Activated CD4-positive, alpha-beta T cell treated with anti-CD3 and anti-CD28 coated beads, Interleukin-2, amount 10 ng/mL, durations not matched to agents 7 days and 5 days (primary cell): ENCODE measurements at regions of chr16 and their contacts with region 1.

Region 1: DNA sequence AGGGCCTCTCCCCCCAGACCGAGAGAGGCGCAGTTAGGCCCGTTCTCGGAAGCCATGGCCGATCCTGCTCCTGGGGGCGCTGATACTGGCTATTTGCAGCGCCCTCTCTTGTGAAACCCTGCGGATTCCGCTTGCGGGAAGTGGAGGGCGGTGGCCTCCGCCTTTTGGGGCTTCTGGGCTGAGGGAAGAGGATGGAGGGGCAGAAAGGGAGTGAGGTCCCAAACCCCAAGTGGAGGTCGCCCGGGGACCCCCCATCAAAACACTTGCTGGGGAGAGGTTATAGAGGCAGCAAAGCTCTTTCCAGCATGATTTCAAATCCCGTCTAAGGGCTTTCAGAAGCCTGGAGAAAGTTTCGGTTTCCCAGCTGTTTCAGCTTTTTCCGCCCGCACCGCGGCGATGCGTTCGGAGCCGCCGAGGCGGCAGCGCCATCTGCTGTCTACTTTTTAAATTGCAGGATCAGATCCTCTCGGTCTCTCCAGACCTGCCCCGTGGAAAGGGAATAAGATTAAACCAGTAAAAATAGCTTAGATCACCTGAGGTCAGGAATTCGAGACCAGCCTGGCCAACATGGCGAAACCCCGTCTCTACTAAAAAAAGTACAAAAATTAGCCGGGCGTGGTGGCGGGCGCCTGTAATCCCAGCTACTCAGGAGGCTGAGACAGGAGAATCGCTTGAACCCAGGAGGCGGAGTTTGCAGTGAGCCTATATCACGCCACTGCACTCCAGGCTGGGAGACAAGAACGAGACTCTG is 15.8 kb downstream of the SNX20 start:
- DNase-seq: peak; percentile 88
- H3K4me3 Mint-ChIP-seq: peak overlapping the region; percentile 65
- H3K27ac Mint-ChIP-seq: peak overlapping the region; percentile 92
- H3K4me1 Mint-ChIP-seq: peaks cover 49% of the 10 kb centered on the region
- H3K27me3 Mint-ChIP-seq: no peaks in the 10 kb centered on the region

Region 2: DNA sequence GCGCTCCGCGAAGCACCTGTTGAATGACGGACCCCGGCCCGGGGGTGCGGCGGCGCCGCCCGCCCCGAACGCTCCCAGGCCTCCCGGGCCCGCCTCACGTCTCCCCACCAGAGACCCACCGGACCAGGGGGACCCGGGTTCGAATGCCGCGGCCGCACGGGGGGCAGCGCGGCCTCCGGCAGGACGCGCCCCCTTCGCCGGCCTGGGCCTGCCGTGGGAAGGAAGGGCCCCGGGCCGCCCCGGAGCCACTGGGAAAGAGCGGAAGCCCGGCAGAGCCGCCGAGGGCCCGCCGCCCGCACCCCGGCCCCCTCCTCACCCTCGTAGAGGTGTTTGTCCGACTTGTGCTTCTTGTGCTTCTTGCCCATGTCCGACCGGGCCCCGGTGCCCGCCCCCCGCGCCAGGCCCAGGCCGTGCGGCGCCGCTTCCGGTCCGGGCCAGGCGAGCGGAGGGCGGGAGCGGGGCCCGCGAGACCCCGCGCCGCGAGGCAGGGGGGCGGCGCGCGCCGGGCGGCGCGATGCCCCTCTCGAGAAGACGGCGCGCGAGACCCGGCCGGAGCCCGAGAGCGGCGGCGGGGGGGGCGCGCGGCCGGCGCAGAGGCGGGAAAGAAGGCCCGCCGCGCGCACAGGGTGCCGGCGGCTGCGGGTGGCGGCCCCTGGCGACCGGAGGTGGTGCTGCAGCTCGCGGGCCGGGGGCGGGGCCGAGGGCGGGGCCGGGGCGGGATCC is 296.7 kb before region 1 on chr16 and contains the start of gene BRD7:
- CTCF ChIA-PET with region 1: interaction called, 11 read pairs
- POLR2A ChIA-PET with region 1: interaction called, 7 read pairs
- DNase-seq: peak; percentile 59
- H3K4me3 Mint-ChIP-seq: peak within 1 kb of the TSS; percentile 87
- H3K27ac Mint-ChIP-seq: peak within 1 kb of the TSS; percentile 92
- H3K4me1 Mint-ChIP-seq: peaks cover 44% of the 10 kb centered on the region
- H3K27me3 Mint-ChIP-seq: no peaks in the 10 kb centered on the region
- total RNA-seq, gene BRD7: 102 to 105 TPM

Region 3: GRCh38 chr16:50555952-50556673 is 109.2 kb before region 1 on chr16:
- CTCF ChIA-PET with region 1: no interaction called
- POLR2A ChIA-PET with region 1: no interaction called
- DNase-seq: no peak
- H3K4me3 Mint-ChIP-seq: no peak overlapping the region
- H3K27ac Mint-ChIP-seq: no peak overlapping the region
- H3K4me1 Mint-ChIP-seq: no peaks in the 10 kb centered on the region
- H3K27me3 Mint-ChIP-seq: peaks cover 15% of the 10 kb centered on the region

Region 4: DNA sequence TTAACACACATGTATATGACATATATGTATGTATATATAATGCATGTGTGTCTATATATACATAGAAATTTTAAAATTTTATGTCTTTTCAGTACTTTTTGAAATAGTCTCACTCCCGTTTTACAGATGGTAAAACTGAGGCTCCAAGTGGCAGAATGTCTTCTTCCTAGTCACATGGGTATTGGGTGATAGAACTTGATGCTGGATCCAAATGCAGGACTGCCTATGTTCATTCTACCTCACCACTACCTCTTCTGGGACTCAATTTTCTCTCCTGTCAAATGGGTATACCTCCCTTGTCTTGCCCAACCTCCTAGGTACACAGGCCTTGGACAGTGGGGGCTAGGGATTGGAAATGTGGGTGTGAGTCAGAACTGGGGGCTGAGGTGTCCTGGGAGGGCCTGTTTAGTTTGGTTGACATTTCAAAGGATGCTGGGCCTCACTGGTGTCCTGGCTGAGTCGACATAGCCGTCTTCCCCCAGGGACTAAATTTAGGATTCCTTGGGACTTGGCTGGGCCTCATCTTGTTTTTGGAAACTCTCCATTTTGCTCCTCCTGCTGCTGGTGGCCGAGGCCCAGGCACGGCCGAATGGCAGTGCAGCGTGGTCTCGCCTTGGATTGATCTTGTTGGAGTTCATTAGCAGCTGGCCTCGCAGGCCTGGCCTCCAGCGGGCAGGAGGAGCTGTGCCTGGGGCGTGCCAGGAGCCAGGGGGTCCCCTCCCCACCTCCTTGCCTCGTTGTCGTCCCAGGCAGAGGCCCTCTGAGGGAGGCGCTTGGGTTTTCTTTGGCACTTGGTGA is 91.2 kb before region 1 on chr16:
- CTCF ChIA-PET with region 1: no interaction called
- POLR2A ChIA-PET with region 1: no interaction called
- DNase-seq: no peak
- H3K4me3 Mint-ChIP-seq: no peak overlapping the region
- H3K27ac Mint-ChIP-seq: no peak overlapping the region
- H3K4me1 Mint-ChIP-seq: no peaks in the 10 kb centered on the region
- H3K27me3 Mint-ChIP-seq: no peaks in the 10 kb centered on the region

Region 5: DNA sequence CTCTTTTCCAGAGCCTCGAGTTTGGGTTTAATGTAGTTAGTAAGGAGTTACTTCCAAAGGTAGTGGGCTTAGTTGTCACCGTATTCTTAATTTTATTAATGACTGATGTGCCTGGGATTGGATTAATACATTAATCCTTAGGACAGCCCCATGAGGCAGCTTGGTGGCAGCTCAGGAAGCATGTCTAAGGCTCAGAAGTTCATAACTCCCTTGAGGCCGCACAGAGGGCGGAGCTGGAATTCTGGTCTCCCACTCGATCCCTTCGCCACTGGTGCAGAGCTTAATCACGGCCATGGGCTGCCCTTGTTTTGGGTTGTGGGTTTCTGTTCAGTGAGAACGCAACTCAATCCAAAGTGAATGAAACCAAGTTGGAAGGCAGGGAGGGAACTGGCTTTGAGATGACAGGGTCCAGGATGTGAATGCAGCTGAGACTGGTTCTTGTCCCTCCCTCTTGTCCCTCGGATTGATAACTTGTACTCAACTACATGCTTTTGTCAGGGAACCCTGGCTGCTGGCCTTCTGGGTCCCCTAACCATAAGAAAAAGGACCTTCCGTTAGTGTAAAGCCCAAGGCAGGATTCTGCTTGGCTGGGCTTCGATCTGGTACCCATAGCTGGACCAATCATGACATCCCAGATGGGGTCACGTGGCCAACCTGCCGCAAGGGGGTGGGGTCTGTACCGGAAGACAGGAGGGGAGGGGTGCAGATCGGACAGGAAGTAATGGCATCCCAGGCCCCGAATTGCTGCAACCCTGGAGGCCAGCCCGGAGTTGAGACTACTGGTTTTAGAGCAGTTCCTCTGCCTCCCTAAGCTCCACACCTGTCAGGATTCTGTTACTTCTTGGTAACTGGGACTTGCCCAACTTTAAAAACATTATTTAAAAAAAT is 29.6 kb before region 1 on chr16:
- CTCF ChIA-PET with region 1: interaction called, 10 read pairs
- POLR2A ChIA-PET with region 1: interaction called, 5 read pairs
- DNase-seq: peak; percentile 26
- H3K4me3 Mint-ChIP-seq: no peak overlapping the region
- H3K27ac Mint-ChIP-seq: no peak overlapping the region
- H3K4me1 Mint-ChIP-seq: peaks cover 5% of the 10 kb centered on the region
- H3K27me3 Mint-ChIP-seq: no peaks in the 10 kb centered on the region

Region 6: GRCh38 chr16:50681021-50681885 is 15.9 kb after region 1 on chr16 and contains the start of gene SNX20:
- CTCF ChIA-PET with region 1: interaction called, 224 read pairs
- POLR2A ChIA-PET with region 1: interaction called, 4 read pairs
- DNase-seq: peak; percentile 79
- H3K4me3 Mint-ChIP-seq: peak within 1 kb of the TSS; percentile 88
- H3K27ac Mint-ChIP-seq: peak within 1 kb of the TSS; percentile 91
- H3K4me1 Mint-ChIP-seq: peaks cover 89% of the 10 kb centered on the region
- H3K27me3 Mint-ChIP-seq: no peaks in the 10 kb centered on the region
- total RNA-seq, gene SNX20: 83.9 to 98.5 TPM

Region 7: GRCh38 chr16:50747207-50747956 is 82.1 kb after region 1 on chr16:
- CTCF ChIA-PET with region 1: interaction called, 17 read pairs
- POLR2A ChIA-PET with region 1: interaction called, 13 read pairs
- DNase-seq: peak; percentile 67
- H3K4me3 Mint-ChIP-seq: peak overlapping the region; percentile 95
- H3K27ac Mint-ChIP-seq: peak overlapping the region; percentile 88
- H3K4me1 Mint-ChIP-seq: peaks cover 59% of the 10 kb centered on the region
- H3K27me3 Mint-ChIP-seq: no peaks in the 10 kb centered on the region

Region 8: DNA sequence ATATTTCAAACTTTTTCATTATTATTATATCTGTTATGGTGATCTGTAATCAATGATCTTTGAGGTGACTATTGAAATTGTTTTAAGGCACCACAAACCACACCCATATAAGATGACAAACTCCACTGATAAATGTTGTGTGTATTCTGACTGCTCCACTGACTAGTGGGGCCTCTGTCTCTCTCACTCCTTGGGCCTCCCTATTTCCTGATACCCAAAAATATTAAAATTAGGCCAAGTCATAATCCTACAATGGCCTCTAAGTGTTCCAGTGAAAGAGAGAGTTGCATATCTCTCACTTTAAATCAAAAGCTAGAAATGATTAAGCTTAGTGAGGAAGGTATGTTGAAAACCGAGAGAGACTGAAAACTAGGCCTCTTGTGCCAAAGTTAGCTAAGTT is 100.0 kb after region 1 on chr16:
- CTCF ChIA-PET with region 1: no interaction called
- POLR2A ChIA-PET with region 1: no interaction called
- DNase-seq: no peak
- H3K4me3 Mint-ChIP-seq: no peak overlapping the region
- H3K27ac Mint-ChIP-seq: no peak overlapping the region
- H3K4me1 Mint-ChIP-seq: peaks cover 77% of the 10 kb centered on the region
- H3K27me3 Mint-ChIP-seq: no peaks in the 10 kb centered on the region

Region 9: GRCh38 chr16:50960517-50961202 is 295.4 kb after region 1 on chr16:
- CTCF ChIA-PET with region 1: no interaction called
- POLR2A ChIA-PET with region 1: no interaction called
- DNase-seq: no peak
- H3K4me3 Mint-ChIP-seq: no peak overlapping the region
- H3K27ac Mint-ChIP-seq: no peak overlapping the region
- H3K4me1 Mint-ChIP-seq: no peaks in the 10 kb centered on the region
- H3K27me3 Mint-ChIP-seq: peaks cover 3% of the 10 kb centered on the region